ENCODE measurements at regions of chr10 and their contacts with region 1.

Region 1: GRCh38 chr10:103637927-103638557 is 144.5 kb downstream of the NEURL1 start:
- DNase-seq: peak; percentile 96 to 99
- H3K4me3 ChIP-seq: peak overlapping the region in 1 of 2 donors; percentile 48
- H3K27ac ChIP-seq: peak overlapping the region; percentile 91 to 97
- H3K4me1 ChIP-seq: peaks cover 24 to 48% of the 10 kb centered on the region in 2 donors
- H3K27me3 ChIP-seq: no peaks in the 10 kb centered on the region
- CTCF ChIP-seq: no peak

Region 2: DNA sequence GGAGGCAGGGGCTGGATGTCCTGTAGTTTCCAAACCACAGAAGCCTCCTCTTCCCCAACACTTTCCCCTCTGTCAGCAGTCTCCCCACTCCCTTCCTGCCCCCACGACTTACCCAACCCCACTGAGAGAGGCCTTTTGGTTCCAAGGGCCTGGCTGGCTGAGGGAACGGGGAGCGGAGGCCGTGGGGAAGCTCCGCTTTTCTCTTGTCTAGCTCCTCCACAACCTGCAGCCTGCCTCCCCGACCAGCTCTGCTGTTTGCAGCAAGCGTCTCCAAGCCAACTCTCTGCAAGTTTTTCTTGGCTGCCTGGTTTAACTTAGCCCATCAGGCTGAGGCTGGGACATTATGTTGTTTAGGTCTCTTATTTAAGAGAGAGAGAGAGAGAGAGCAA is 17.7 kb before region 1 on chr10:
- intact Hi-C with region 1: loop called (anchors 2 kb)
- DNase-seq: no peak
- H3K4me3 ChIP-seq: peak overlapping the region in 1 of 2 donors; percentile 17
- H3K27ac ChIP-seq: peak overlapping the region; percentile 80
- H3K4me1 ChIP-seq: peaks cover 28 to 56% of the 10 kb centered on the region in 2 donors
- H3K27me3 ChIP-seq: no peaks in the 10 kb centered on the region
- CTCF ChIP-seq: no peak

Measured in ascending aorta (tissue), 2 donors.